ENCODE measurements at regions of chr3 and their contacts with region 1.

Region 1: GRCh38 chr3:15268033-15268631 is 62.1 kb downstream of the CAPN7 start:
- DNase-seq: no peak
- H3K4me3 ChIP-seq: no peak overlapping the region
- H3K27me3 ChIP-seq: no peaks in the 10 kb centered on the region
- CTCF ChIP-seq: peak; percentile 97

Region 2: DNA sequence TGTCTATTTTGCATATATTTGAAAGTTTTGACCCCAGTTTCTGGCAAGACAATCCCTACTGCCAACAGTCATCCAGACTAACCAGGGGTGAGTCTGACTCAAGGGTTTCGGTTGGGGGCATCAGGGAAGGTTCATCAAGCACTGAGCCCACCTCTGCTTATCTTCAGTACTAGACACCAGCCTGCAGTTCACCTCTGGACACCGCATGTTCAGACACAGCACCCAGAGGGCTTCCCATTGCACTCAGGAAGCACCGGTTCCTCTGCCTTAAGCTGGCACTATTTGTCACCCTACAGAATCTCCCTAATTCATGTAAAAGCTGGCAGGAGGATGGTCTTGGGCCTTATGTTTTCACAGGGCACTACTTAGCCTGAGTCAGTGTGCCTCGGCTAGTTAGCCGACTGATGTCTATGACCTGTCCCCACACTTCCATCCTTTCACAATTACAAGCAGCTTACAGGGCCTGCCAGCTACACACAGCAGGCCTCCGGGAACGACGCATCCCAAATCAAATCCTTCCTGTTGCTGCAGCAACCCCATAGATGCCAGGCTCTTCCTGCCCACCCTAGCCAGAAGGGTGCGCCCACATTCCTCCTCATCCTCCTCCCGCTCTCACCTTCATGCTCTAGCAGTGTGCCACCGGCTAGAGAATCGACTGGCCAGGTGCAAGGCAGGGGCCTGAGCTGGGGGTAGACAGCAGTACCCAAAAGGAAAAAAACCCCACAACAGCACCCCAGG is 11.7 kb after region 1 on chr3:
- CTCF ChIA-PET with region 1: interaction called, 38 read pairs
- POLR2A ChIA-PET with region 1: no interaction called
- DNase-seq: no peak
- H3K4me3 ChIP-seq: no peak overlapping the region
- H3K27me3 ChIP-seq: no peaks in the 10 kb centered on the region
- CTCF ChIP-seq: no peak

Region 3: DNA sequence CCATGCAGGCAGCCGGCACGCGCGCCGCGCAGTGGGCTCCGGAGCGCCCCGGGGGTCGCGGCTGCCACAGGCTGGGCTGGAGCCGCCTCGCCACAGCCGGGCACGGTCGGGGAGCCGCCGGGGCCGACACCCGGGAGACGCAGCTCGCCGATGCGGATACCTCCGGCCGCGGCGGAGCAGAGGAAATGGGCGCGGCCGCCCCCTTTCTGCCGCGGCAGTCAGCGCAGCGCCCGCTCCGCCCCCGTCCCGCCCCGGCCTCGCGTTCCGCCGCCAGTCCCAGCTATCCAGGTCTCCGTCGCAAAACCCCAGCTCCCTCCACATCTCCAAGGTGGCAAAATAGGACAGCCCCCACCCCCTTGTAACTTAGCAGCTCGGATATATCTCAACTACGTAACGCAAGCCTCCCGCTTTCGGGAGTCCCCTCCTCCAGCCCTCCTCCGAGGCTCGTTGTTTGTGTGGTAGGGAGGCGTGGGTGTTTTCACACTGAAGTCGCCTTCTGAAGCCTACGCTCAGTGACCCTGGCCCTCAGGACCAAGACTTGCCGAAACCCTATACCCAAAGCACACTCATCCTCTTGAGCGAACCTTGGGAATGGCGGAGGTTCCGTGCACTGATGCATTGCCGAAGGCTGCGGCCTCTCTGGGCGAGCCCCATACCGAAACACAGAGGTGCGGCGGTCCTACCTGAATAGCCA is 64.4 kb after region 1 on chr3 and contains the start of gene SH3BP5:
- CTCF ChIA-PET with region 1: interaction called, 77 read pairs
- POLR2A ChIA-PET with region 1: no interaction called
- DNase-seq: no peak
- H3K4me3 ChIP-seq: peak within 1 kb of the TSS; percentile 83
- H3K27me3 ChIP-seq: no peaks in the 10 kb centered on the region
- CTCF ChIP-seq: peak; percentile 31
- polyA plus RNA-seq, gene SH3BP5: 23.5 and 30.9 TPM in 2 replicates

Region 4: DNA sequence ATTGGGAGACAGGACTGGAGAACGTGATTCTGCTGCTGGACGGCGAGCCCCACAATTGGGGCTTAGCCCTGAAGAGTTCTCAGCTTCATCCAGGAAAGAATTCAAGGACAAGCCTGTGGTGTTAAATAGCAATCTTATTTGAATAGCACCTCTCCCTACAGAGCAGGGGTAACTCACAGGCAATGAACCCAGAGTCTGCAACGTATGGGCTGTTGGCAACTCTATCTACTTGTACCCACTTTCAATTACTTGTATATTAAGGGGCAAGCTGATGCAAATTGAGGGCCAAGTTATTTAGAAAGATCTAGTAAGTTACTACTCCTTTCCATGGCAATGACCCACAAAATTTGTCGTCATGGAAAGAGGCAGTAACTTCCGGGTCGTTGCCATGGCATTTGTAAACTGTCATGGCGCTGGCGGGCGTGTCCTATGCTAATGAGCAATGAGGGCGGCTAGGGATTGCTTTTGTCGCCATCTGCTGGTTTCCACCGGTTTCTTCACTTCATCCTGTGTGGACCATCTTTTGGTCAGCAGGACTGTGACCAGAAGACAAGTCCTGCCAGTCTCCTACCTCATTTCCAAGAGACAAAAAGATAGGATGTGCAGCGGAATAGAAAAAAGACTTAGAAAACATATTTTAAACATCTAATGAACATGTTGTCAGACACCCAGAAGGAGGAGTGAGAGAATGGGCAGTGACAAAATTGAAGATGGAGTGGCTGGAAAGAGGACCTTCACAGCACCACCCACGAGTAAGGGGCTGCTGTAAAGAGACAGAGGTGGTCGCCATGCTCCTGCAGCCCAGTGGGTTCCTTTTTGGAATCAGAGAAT is 110.0 kb after region 1 on chr3:
- CTCF ChIA-PET with region 1: interaction called, 112 read pairs
- POLR2A ChIA-PET with region 1: no interaction called
- DNase-seq: peak; percentile 62
- H3K4me3 ChIP-seq: no peak overlapping the region
- H3K27me3 ChIP-seq: no peaks in the 10 kb centered on the region
- CTCF ChIP-seq: peak; percentile 86

Region 5: DNA sequence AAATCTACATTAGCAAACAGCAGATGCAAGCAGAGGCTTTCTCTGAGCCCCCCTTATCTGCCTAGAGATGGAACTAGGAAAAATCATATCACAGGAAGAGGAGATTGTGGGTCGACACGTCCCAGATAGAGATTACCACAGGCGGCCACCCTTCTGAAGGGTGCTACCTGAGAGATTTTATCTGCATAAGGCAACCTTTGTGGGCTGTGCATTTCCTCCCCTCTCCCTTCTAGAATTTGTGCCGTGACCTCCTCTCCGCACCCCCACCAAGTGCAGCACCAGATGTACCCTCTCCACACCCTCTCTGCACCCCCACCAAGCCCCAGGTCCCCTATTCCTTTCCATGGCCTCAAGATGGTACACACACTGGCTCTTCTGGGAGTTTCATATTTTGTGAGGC is 131.8 kb after region 1 on chr3:
- CTCF ChIA-PET with region 1: interaction called, 75 read pairs
- POLR2A ChIA-PET with region 1: no interaction called
- DNase-seq: no peak
- H3K4me3 ChIP-seq: no peak overlapping the region
- H3K27me3 ChIP-seq: no peaks in the 10 kb centered on the region
- CTCF ChIP-seq: no peak